Activated CD4-positive, alpha-beta T cell treated with anti-CD3 and anti-CD28 coated beads, Interleukin-2, amount 10 ng/mL, durations not matched to agents 24 days and 14 days (primary cell): ENCODE measurements at regions of chr9 and their contacts with region 1.

Region 1: DNA sequence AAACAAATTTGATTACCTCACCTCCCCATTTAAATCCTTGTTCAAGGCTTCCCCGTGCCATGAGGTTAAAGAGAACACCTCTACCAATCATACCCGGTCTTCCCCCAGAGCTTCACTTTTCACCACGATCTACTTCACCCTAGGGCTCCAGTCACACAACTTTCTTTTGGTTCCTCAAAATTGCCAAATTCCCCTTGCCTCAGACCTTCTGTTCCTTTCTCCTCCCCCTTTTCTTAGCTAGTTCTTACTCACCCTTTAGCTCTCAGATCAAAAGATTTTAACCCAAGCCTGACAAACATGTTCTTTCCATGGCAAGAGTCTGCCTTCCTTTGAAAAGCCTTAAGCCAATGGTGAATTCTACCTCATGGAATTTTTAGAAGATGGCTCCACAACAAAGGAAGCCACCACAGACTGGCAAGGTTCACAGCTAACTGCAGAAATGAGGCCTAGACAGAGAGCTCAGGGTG is 56.7 kb downstream of the MAPKAP1 start:
- DNase-seq: peak; percentile 61
- H3K4me3 Mint-ChIP-seq: peak overlapping the region; percentile 48
- H3K27ac Mint-ChIP-seq: peak overlapping the region; percentile 86
- H3K4me1 Mint-ChIP-seq: peaks cover 49% of the 10 kb centered on the region
- H3K27me3 Mint-ChIP-seq: no peaks in the 10 kb centered on the region

Region 2: DNA sequence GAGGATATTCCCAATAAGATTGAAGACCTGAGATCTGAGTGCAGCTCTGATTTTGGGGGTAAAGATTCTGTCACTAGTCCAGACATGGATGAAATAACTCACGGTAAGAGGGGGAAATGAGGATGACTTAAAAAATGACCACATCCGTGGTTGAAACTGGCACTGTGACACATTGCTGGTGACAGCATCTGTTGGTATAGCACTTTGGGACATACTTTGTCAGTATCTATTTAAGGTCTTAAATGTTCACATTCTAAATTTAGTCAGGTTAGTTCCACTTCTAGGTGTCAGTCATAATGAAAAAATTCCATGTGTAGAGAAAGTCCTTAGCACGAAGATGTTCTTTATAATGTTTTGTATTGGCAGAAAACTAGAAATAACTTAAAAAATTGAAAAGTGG is 317.8 kb before region 1 on chr9:
- intact Hi-C with region 1: loop called (anchors 10 kb)
- DNase-seq: peak; percentile 60
- H3K4me3 Mint-ChIP-seq: no peak overlapping the region
- H3K27ac Mint-ChIP-seq: peak overlapping the region; percentile 7
- H3K4me1 Mint-ChIP-seq: peaks cover 12% of the 10 kb centered on the region
- H3K27me3 Mint-ChIP-seq: no peaks in the 10 kb centered on the region

Region 3: GRCh38 chr9:125601961-125602360 is 48.3 kb before region 1 on chr9:
- intact Hi-C with region 1: no loop called
- DNase-seq: no peak
- H3K4me3 Mint-ChIP-seq: no peak overlapping the region
- H3K27ac Mint-ChIP-seq: no peak overlapping the region
- H3K4me1 Mint-ChIP-seq: peaks cover 2% of the 10 kb centered on the region
- H3K27me3 Mint-ChIP-seq: no peaks in the 10 kb centered on the region

Region 4: GRCh38 chr9:125700791-125701190 is 50.5 kb after region 1 on chr9:
- intact Hi-C with region 1: loop called (anchors 1 kb)
- DNase-seq: peak; percentile 61
- H3K4me3 Mint-ChIP-seq: peak overlapping the region; percentile 29
- H3K27ac Mint-ChIP-seq: peak overlapping the region; percentile 61
- H3K4me1 Mint-ChIP-seq: peaks cover 37% of the 10 kb centered on the region
- H3K27me3 Mint-ChIP-seq: no peaks in the 10 kb centered on the region